CD8-positive, alpha-beta T cell (primary cell): ENCODE measurements at regions of chr7 and their contacts with region 1.

Region 1: DNA sequence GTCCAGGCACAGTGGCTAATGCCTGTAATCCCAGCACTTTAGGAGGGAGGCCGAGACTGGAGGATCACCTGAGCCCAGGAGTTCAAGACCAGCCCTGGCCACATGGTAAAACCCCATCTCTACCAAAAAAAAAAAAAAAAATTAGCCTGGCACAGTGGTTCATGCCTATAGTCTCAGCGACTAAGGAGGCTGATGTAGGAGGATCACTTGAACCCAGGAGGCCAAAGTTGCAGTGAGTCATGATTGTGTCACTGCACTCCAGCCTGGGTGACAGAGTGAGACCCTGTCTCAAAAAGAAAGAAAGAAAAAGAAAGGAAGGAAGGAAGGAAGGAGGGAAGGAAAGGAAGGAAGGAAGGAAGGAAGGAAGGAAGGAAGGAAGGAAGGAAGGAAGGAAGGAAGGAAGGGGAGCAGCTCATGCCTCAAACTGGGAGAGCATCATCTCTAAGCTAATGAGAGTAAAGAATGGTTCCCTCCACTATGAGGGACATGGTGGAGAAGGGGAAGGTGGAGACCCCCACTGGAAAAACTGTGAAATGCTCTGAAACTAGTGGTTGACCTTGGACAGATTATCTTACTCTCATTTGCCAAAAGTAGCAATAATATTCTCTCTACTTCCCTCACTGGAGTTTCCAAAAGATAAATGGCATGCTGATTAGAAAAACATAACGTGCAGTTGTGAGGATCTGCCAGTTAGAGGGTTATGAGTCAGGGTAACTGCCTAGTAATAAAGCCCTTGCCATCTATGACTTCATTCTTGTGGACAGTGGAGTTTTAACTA is 16.8 kb downstream of the GIMAP5 start:
- DNase-seq: peak in 2 of 9 experiments; percentile 57 to 73
- ATAC-seq: peak; percentile 8
- H3K4me3 ChIP-seq: no peak overlapping the region
- H3K4me3 Mint-ChIP-seq: peak overlapping the region; percentile 19
- H3K27ac ChIP-seq: peak overlapping the region in 1 of 2 experiments; percentile 83
- H3K27ac Mint-ChIP-seq: peak overlapping the region; percentile 94
- H3K4me1 ChIP-seq: peaks cover 76% of the 10 kb centered on the region
- H3K4me1 Mint-ChIP-seq: peaks cover 72% of the 10 kb centered on the region
- H3K27me3 ChIP-seq: no peaks in the 10 kb centered on the region
- H3K27me3 Mint-ChIP-seq: no peaks in the 10 kb centered on the region
- CTCF ChIP-seq: no peak

Region 2: DNA sequence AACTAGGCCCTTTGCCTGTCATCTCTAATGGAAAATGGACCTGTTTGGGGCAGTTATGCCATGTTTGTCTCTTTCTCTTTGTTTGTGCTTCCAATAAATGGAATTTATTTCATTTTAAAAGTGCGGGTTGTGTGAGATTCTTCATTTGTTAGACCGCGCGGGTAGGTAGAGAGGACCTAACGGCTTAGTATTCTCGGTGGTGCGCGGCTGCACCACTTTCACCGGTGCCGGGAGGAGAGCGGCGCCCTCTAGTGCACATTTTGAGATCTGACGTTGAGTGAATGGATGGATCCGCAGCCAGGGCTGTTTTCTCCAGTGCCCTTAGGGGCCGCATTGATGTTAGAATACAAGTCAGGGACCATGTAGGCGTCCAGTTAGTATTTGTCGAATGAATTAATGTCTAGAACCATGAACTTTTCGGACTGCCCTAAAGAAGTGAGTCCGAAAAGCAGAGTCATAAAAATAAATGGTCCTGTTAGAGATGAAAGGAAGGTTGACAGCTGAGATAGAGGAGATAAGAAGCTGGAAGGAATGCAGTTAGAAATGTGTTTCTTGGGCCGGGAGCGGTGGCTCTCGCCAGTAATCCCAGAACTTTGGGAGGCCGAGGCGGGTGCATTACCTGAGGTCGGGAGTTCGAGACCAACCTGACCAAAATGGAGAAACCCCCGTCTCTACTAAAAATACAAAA is 332.9 kb before region 1 on chr7:
- CTCF ChIA-PET with region 1: interaction called, 5 read pairs
- POLR2A ChIA-PET with region 1: no interaction called
- intact Hi-C with region 1: loop called in 1 of 2 experiments (anchors 1 kb)
- DNase-seq: peak; percentile 75 to 93 (median 88)
- ATAC-seq: peak; percentile 99
- H3K4me3 ChIP-seq: no peak overlapping the region
- H3K4me3 Mint-ChIP-seq: no peak overlapping the region
- H3K27ac ChIP-seq: no peak overlapping the region
- H3K27ac Mint-ChIP-seq: no peak overlapping the region
- H3K4me1 ChIP-seq: peaks cover 4% of the 10 kb centered on the region
- H3K4me1 Mint-ChIP-seq: peaks cover 5% of the 10 kb centered on the region
- H3K27me3 ChIP-seq: no peaks in the 10 kb centered on the region
- H3K27me3 Mint-ChIP-seq: no peaks in the 10 kb centered on the region
- CTCF ChIP-seq: peak; percentile 91

Region 3: GRCh38 chr7:150520145-150520544 is 233.9 kb before region 1 on chr7:
- CTCF ChIA-PET with region 1: interaction called, 8 read pairs
- POLR2A ChIA-PET with region 1: interaction called, 23 read pairs
- intact Hi-C with region 1: loop called (anchors 1 to 2 kb)
- DNase-seq: peak in 6 of 9 experiments; percentile 9 to 75 (median 33)
- ATAC-seq: peak; percentile 27
- H3K4me3 ChIP-seq: peak overlapping the region; percentile 58 to 76
- H3K4me3 Mint-ChIP-seq: peak overlapping the region; percentile 100
- H3K27ac ChIP-seq: peak overlapping the region; percentile 58 to 75
- H3K27ac Mint-ChIP-seq: peak overlapping the region; percentile 91
- H3K4me1 ChIP-seq: peaks cover 12% of the 10 kb centered on the region
- H3K4me1 Mint-ChIP-seq: peaks cover 44% of the 10 kb centered on the region
- H3K27me3 ChIP-seq: no peaks in the 10 kb centered on the region
- H3K27me3 Mint-ChIP-seq: no peaks in the 10 kb centered on the region
- CTCF ChIP-seq: no peak

Region 4: DNA sequence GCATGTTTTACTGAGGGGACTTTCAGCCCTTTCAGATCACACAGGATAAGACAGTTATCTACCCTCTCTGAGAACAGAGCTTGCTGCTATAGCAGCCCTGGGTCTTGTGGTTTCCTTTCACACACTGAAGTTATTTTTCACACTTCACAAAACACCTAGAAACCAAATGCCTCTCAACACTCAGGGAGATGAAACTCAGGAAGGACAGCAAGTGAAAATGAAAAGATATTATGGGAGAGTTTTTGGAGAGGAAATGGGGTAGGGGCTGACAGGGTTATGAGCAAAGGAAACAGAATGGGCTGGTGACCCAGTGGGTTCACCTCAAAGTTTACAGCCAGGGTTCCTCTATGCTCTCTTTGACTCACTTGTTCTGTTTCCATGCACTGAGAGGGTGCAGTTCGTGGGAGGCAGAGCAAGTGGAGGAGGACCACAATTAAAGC is 85.5 kb before region 1 on chr7:
- CTCF ChIA-PET with region 1: interaction called, 10 read pairs
- POLR2A ChIA-PET with region 1: interaction called, 4 read pairs
- intact Hi-C with region 1: loop called in 1 of 2 experiments (anchors 2 kb)
- DNase-seq: peak in 6 of 9 experiments; percentile 60 to 94 (median 72)
- ATAC-seq: peak; percentile 76
- H3K4me3 ChIP-seq: peak overlapping the region in 1 of 2 experiments; percentile 17
- H3K4me3 Mint-ChIP-seq: peak overlapping the region; percentile 36
- H3K27ac ChIP-seq: peak overlapping the region; percentile 63 to 95
- H3K27ac Mint-ChIP-seq: peak overlapping the region; percentile 97
- H3K4me1 ChIP-seq: peaks cover 88% of the 10 kb centered on the region
- H3K4me1 Mint-ChIP-seq: peaks cover 90% of the 10 kb centered on the region
- H3K27me3 ChIP-seq: no peaks in the 10 kb centered on the region
- H3K27me3 Mint-ChIP-seq: no peaks in the 10 kb centered on the region
- CTCF ChIP-seq: no peak

Region 5: GRCh38 chr7:150716368-150716767 is 37.6 kb before region 1 on chr7 and contains the start of gene GIMAP1:
- CTCF ChIA-PET with region 1: interaction called, 22 read pairs
- POLR2A ChIA-PET with region 1: interaction called, 169 read pairs
- intact Hi-C with region 1: loop called in 1 of 2 experiments (anchors 2 kb)
- DNase-seq: peak in 8 of 9 experiments; percentile 59 to 85 (median 73)
- ATAC-seq: peak; percentile 84
- H3K4me3 ChIP-seq: peak within 1 kb of the TSS; percentile 90 to 91
- H3K4me3 Mint-ChIP-seq: peak within 1 kb of the TSS; percentile 95
- H3K27ac ChIP-seq: peak within 1 kb of the TSS; percentile 73 to 87
- H3K27ac Mint-ChIP-seq: peak within 1 kb of the TSS; percentile 96
- H3K4me1 ChIP-seq: peaks cover 50% of the 10 kb centered on the region
- H3K4me1 Mint-ChIP-seq: peaks cover 67% of the 10 kb centered on the region
- H3K27me3 ChIP-seq: no peaks in the 10 kb centered on the region
- H3K27me3 Mint-ChIP-seq: no peaks in the 10 kb centered on the region
- CTCF ChIP-seq: no peak
- total RNA-seq, gene GIMAP1: 6.1 to 6.2 TPM

Region 6: DNA sequence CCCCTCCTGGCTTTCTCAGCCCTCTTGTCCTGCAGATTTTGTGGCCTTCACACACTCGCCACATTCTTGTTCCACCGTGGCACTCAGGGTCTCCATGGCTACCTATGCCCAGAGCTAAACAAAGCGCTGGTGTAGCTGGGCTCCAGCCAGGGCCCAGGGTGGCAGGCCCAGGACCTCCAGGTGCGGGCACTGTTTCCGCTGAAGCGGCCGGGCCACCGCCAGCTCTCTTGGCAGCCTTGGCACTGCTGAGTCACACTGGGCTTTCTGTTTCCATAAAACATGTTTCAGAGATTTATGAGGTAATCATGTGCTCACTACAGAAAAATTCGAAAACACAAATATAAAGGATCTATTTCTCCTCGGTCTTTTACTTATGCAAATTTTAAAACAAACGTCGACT is 149.6 kb after region 1 on chr7:
- CTCF ChIA-PET with region 1: no interaction called
- POLR2A ChIA-PET with region 1: no interaction called
- intact Hi-C with region 1: no loop called
- DNase-seq: no peak
- ATAC-seq: no peak
- H3K4me3 ChIP-seq: no peak overlapping the region
- H3K4me3 Mint-ChIP-seq: no peak overlapping the region
- H3K27ac ChIP-seq: no peak overlapping the region
- H3K27ac Mint-ChIP-seq: no peak overlapping the region
- H3K4me1 ChIP-seq: peaks cover 2% of the 10 kb centered on the region
- H3K4me1 Mint-ChIP-seq: peaks cover 2% of the 10 kb centered on the region
- H3K27me3 ChIP-seq: peaks cover 0 to 5% of the 10 kb centered on the region in 2 experiments
- H3K27me3 Mint-ChIP-seq: peaks cover 40% of the 10 kb centered on the region
- CTCF ChIP-seq: no peak